ENCODE measurements at regions of chr9 and their contacts with region 1.

Region 1: GRCh38 chr9:122940603-122941559 is at the start of gene RABGAP1:
- DNase-seq: peak; percentile 99
- H3K4me3 Mint-ChIP-seq: peak within 1 kb of the TSS; percentile 99
- H3K27ac Mint-ChIP-seq: peak within 1 kb of the TSS; percentile 90
- H3K4me1 Mint-ChIP-seq: peaks cover 31% of the 10 kb centered on the region
- H3K27me3 Mint-ChIP-seq: no peaks in the 10 kb centered on the region
- total RNA-seq, gene RABGAP1: 23.9 and 25.7 TPM in 2 replicates

Region 2: GRCh38 chr9:122827761-122828093 is 113.2 kb before region 1 on chr9:
- intact Hi-C with region 1: loop called (anchors 1 kb)
- DNase-seq: no peak
- H3K4me3 Mint-ChIP-seq: peak overlapping the region; percentile 93
- H3K27ac Mint-ChIP-seq: peak overlapping the region; percentile 94
- H3K4me1 Mint-ChIP-seq: peaks cover 23% of the 10 kb centered on the region
- H3K27me3 Mint-ChIP-seq: no peaks in the 10 kb centered on the region

Region 3: DNA sequence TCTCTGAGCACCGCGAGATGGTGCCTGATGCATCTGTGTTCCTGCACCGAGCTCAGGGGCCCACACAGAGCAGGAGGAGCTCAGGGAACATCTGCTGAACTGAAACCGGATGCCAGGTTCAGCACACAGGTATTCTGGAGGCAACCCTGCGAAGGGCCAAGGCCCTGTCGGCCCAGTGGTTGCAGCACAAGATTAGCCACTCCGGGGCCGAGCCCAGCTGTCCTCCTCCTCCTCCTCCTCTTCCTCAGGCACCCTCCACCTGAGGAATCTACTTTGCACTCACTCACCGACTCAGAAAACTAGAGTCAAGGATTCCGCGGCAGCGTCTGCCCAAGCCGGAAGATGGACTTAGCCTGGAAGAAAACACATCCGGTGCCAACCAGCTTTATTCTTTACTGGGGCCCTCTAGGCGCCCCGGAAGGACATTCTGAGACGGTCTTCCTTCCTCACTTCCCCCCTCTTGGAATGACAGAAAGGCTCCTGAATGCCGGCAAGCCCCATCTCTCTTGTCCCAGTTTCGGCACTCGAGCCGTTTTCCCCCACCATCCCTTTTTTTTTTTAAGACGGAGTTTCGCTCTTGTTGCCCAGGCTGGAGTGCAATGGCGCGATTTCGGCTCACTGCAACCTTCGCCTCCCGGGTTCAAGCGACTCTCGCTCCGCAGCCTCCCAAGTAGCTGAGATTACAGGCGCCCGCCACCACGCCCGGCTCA is 27.8 kb before region 1 on chr9 and contains the start of gene ZBTB6:
- intact Hi-C with region 1: loop called (anchors 2 kb)
- DNase-seq: peak; percentile 91
- H3K4me3 Mint-ChIP-seq: peak within 1 kb of the TSS; percentile 91
- H3K27ac Mint-ChIP-seq: peak within 1 kb of the TSS; percentile 97
- H3K4me1 Mint-ChIP-seq: peaks cover 17% of the 10 kb centered on the region
- H3K27me3 Mint-ChIP-seq: no peaks in the 10 kb centered on the region
- total RNA-seq, gene ZBTB6: 10.7 and 11.6 TPM in 2 replicates

Region 4: DNA sequence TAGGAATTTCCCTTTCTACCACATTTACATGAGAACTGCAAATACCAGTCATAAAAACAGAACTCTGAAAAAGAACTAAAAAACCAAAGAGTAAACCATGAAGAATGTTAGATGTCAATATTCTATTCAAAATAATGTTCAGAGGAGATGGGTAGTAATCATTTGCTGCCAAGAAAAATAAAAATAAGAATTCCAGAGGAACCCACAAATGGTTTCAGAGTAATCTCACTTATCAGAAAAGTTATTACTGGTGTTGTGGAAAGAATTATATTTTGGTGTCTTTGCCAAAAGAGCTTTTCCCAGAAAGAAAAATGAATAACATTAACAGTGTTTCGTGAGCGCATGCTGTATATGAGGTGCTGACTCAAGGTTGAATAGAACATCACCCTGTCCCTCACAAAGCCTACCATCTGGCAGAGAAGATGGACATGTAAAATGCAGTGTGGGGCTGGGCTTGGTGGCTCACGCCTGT is 128.2 kb after region 1 on chr9:
- intact Hi-C with region 1: loop called (anchors 10 kb)
- DNase-seq: no peak
- H3K4me3 Mint-ChIP-seq: no peak overlapping the region
- H3K27ac Mint-ChIP-seq: peak overlapping the region; percentile 46
- H3K4me1 Mint-ChIP-seq: peaks cover 3% of the 10 kb centered on the region
- H3K27me3 Mint-ChIP-seq: no peaks in the 10 kb centered on the region

Region 5: GRCh38 chr9:123338710-123339665 is 398.1 kb after region 1 on chr9:
- intact Hi-C with region 1: loop called (anchors 10 kb)
- DNase-seq: peak; percentile 89
- H3K4me3 Mint-ChIP-seq: peak overlapping the region; percentile 80
- H3K27ac Mint-ChIP-seq: peak overlapping the region; percentile 97
- H3K4me1 Mint-ChIP-seq: peaks cover 43% of the 10 kb centered on the region
- H3K27me3 Mint-ChIP-seq: no peaks in the 10 kb centered on the region